Mammary epithelial cell (primary cell): ENCODE measurements at regions of chr2 and their contacts with region 1.

Region 1: GRCh38 chr2:158984604-158985135 is 16.2 kb downstream of the TANC1 start:
- DNase-seq: no peak
- H3K4me3 ChIP-seq: no peak overlapping the region
- H3K27ac ChIP-seq: no peak overlapping the region
- H3K4me1 ChIP-seq: peaks cover 25% of the 10 kb centered on the region
- H3K27me3 ChIP-seq: no peaks in the 10 kb centered on the region
- CTCF ChIP-seq: no peak

Region 2: DNA sequence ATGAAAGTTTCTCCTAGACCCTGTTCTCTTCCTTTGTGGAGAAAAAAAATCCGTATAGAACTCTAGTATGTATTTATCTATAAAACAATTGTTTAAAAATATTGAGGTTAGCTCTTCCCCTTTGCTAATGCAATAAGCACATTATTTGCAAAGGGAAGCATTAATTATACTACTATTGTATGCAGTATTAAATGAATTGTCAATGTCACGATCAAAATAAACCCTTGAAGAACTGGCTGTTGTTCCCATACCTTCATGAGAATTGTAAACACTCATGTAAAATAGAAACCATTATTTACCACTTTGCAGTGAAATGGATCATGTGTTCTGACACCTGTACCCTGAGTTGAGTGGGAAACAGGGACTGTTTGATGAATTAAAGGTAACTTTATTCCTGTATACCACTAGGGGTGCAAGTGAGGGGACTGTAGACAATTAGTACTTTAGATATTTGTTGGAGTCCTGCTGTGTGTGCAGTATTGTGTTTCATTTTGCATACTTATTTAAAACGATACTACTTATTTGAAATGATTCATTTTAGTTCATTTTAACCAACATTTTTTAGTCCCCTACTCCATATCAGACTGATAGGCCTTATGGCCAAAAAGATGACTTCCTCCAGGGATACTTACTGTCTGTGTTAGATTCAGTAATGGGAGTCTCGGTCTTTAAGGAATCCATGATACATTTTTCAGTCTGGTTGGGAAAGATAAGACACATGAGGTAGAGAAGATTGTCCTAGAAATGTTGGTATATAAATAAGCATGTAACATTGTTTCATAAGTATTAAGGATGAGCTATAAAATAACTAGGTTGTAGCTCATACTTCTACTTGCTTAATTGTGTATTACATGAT is 520.0 kb before region 1 on chr2:
- CTCF ChIA-PET with region 1: no interaction called
- dilution Hi-C with region 1: no loop called
- in situ Hi-C with region 1: no loop called
- intact Hi-C with region 1: no loop called
- DNase-seq: no peak
- H3K4me3 ChIP-seq: no peak overlapping the region
- H3K27ac ChIP-seq: no peak overlapping the region
- H3K4me1 ChIP-seq: peaks cover 16% of the 10 kb centered on the region
- H3K27me3 ChIP-seq: no peaks in the 10 kb centered on the region
- CTCF ChIP-seq: peak; percentile 53 to 72

Region 3: DNA sequence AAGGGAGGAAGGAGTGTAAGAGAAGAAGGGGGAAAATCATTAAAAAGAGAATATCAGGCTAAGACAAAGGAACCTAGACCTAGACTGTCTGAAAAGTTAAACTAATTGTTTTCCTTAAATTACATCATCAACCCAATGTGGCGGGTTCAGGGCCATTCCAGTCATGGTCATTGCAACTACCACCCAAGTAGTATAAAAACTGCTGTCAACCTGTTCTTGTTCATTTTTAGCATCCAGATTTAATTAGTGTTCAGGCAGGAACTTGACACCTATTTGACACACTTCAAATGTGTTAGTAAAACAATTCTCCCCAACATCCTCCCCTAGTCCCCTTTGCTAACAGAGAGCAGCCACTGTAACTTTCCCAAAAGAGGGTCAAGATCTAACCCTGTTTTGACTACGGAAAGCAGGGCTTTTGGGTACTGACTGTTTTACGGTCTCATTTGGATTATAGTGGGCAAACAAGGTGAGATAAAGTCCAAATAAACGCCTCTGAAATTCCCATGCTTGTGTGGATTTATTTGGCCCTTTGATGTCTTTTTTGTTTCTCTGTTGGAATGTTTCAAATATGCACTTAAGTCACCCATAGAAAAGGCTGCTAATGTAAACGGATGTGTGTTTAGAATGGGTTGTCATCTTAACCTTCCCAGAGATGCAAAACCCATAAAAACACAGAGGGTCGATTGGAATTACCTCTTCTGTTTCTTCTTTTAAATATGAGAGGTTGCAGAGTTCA is 35.5 kb before region 1 on chr2:
- CTCF ChIA-PET with region 1: no interaction called
- dilution Hi-C with region 1: loop called (anchors 5 kb)
- in situ Hi-C with region 1: no loop called
- intact Hi-C with region 1: no loop called
- DNase-seq: no peak
- H3K4me3 ChIP-seq: no peak overlapping the region
- H3K27ac ChIP-seq: no peak overlapping the region
- H3K4me1 ChIP-seq: peaks cover 8% of the 10 kb centered on the region
- H3K27me3 ChIP-seq: no peaks in the 10 kb centered on the region
- CTCF ChIP-seq: no peak

Region 4: GRCh38 chr2:158998551-158999248 is 14.0 kb after region 1 on chr2:
- CTCF ChIA-PET with region 1: interaction called, 13 read pairs
- dilution Hi-C with region 1: no loop called
- in situ Hi-C with region 1: no loop called
- intact Hi-C with region 1: no loop called
- DNase-seq: peak; percentile 34
- H3K4me3 ChIP-seq: no peak overlapping the region
- H3K27ac ChIP-seq: no peak overlapping the region
- H3K4me1 ChIP-seq: peaks cover 43% of the 10 kb centered on the region
- H3K27me3 ChIP-seq: no peaks in the 10 kb centered on the region
- CTCF ChIP-seq: no peak